Posterior vena cava (tissue), 2 donors: ENCODE measurements at regions of chr3 and their contacts with region 1.

Region 1: DNA sequence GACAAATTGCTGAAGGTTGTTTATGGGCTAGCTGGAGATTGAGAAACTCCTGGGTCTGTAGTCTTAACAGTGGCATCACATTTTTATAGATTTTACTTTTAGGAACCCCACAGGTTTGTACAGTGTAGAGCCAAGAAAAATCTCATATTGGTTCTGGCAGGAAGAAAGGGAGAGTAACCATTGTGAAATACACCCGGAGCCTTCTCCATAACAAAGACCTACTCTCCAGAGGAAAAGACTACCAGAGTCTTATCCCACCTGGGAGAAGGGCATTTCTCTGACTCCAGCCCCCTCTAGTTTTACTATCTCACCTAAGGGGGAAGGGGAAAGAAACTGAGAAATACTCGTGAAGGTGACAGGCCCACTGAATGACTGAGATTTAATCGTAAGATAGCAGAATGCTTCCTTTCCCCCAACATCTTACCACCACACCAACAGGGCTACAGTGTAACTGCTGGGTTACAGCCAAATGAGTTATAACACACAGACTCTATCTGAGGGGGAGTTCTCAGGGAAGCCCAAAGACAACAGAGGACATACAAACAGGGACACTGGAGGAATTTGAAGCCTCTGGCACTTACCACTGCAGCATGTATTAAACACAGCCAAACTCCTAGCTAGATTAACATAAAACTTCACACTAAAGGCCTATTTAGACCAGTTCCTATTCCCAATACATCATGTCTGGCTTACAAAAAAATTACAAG is 56.1 kb downstream of the SYN2 start:
- DNase-seq: no peak

Region 2: GRCh38 chr3:11498646-11499045 is 561.6 kb before region 1 on chr3:
- intact Hi-C with region 1: no loop called
- DNase-seq: no peak

Region 3: DNA sequence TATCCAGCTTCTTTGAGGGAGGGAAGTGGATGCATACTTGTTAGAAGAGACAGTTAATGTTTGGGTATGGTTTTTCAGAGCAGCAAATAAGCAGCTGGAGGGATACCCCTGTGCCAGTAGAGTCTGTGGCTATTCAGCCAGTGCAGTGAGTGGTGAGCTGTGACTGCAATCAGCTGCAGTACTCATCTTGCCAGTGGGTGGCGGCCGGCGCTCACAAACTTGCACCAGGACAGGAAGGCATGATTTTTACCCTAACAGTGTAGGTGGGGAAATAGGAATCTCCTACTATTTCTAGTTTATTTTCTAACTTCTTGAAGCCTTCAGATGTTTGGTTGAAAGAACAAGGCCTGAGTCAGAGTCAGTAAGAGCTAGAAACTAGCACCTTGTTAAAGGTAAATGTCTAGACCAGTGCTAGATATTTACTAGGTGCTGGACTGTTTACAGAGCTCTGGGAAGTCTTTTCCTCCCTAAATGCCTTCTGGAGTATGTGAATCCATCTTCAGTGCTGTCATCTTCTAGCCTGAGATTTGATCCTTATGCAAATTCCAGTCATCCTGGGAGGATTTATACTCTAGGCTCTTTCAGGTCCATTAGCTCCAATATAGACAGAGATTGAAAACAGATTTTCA is 74.9 kb after region 1 on chr3:
- intact Hi-C with region 1: no loop called
- DNase-seq: peak; percentile 92

Region 4: DNA sequence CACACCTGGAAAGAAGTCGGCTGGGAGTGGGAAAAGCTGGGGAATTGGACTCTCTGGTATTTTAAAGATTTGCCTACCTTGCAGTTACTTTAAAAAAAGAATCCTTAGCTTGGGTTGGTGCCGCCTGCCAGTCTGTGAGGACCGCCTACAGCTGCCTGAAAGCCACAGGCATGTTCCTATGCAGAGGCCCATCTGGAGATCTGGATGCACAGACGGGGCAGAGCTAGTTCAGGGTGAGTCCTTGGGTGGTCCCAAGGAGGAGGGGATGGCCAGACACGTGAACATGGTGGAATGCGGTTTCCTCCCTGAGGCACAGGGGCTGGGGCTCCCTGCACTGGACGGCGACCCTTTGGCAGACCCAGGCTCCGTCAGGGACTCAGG is 1126.1 kb after region 1 on chr3:
- intact Hi-C with region 1: loop called in 1 of 2 experiments (anchors 5 kb)
- DNase-seq: peak; percentile 37